K562 (cell line): ENCODE measurements at regions of chr6 and their contacts with region 1.

Region 1: DNA sequence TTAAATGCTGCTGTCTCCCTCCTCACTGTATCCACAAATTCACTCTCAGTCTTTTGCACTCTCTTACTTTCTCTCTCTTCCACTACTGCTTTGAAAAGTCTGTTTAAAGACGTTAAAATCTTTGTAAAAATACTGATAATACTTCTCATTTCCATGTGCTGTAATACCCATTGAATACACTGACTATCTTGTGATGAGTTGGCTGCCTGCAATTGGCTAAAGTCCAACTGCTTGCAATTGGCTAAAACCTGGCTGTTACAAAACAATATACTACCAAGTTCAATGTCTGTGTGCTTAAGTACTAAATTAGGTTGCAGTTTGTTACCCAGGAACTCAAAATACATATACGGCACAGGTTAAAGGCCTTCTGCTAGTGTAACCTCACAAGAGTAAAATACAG is 264.8 kb downstream of the THBS2 start:
- DNase-seq: no peak
- ATAC-seq: no peak
- H3K4me3 ChIP-seq: no peak overlapping the region
- H3K27ac ChIP-seq: no peak overlapping the region
- H3K4me1 ChIP-seq: no peaks in the 10 kb centered on the region
- H3K27me3 ChIP-seq: no peaks in the 10 kb centered on the region
- CTCF ChIP-seq: no peak
- EP300 ChIP-seq: no peak
- POLR2A ChIP-seq: no peak
- RAD21 ChIP-seq: no peak

Region 2: GRCh38 chr6:168884646-168885086 is 104.1 kb before region 1 on chr6:
- CTCF ChIA-PET with region 1: no interaction called
- POLR2A ChIA-PET with region 1: no interaction called
- in situ Hi-C with region 1: no loop called
- intact Hi-C with region 1: no loop called
- DNase-seq: peak; percentile 70 to 89 (median 88)
- ATAC-seq: peak; percentile 99
- H3K4me3 ChIP-seq: no peak overlapping the region
- H3K27ac ChIP-seq: no peak overlapping the region
- H3K4me1 ChIP-seq: peaks cover 0 to 4% of the 10 kb centered on the region in 2 experiments; a peak in 1 of 5 replicates
- H3K27me3 ChIP-seq: peaks cover 40 to 78% of the 10 kb centered on the region in 2 experiments
- CTCF ChIP-seq: peak; percentile 88 to 94 (median 89)
- EP300 ChIP-seq: no peak
- POLR2A ChIP-seq: no peak
- RAD21 ChIP-seq: peak; percentile 75 to 92

Region 3: DNA sequence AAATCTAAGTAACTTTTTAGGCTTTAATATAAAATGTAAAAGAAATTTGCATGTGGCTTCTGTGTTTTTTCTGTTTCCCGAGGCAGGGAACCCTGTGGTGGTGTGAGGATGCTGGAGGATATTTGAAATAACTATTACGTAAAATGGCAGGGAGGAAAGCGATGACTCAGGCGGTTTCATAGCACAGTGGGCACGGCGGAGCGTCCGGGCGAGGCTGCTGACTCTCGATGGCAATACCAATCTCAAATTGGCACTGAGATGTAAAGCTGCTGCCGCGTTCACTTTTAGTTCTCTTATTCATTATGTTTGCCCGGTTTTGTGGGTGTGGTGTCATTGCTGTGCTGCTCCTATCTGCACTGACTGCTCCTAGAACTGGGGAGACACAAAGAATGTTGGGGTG is 10.6 kb after region 1 on chr6:
- CTCF ChIA-PET with region 1: no interaction called
- POLR2A ChIA-PET with region 1: no interaction called
- in situ Hi-C with region 1: no loop called
- intact Hi-C with region 1: no loop called
- DNase-seq: no peak
- ATAC-seq: no peak
- H3K4me3 ChIP-seq: no peak overlapping the region
- H3K27ac ChIP-seq: no peak overlapping the region
- H3K4me1 ChIP-seq: no peaks in the 10 kb centered on the region
- H3K27me3 ChIP-seq: peaks cover 16 to 41% of the 10 kb centered on the region in 2 experiments
- CTCF ChIP-seq: no peak
- EP300 ChIP-seq: no peak
- POLR2A ChIP-seq: no peak
- RAD21 ChIP-seq: no peak

Region 4: DNA sequence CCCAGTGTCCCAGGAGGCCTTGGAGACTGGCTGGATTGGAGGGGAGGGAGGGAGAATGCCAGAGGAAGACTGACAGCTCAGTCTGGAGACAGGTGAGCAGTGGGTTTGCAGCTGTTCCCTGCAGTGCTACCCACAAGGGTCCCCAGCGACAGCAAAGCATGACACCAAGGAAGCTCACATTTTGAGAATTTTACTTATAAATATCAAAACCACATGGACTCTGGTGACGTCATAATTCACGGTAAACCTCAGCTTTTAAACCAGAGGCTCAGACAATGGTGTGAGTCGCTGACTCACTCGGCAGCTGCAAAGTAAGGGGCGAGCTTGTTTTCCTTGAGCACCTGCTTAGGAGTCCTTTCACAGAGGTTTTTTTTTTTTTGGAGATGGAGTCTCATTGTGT is 199.7 kb after region 1 on chr6:
- CTCF ChIA-PET with region 1: no interaction called
- POLR2A ChIA-PET with region 1: no interaction called
- in situ Hi-C with region 1: no loop called
- intact Hi-C with region 1: no loop called
- DNase-seq: no peak
- ATAC-seq: no peak
- H3K4me3 ChIP-seq: no peak overlapping the region
- H3K27ac ChIP-seq: no peak overlapping the region
- H3K4me1 ChIP-seq: no peaks in the 10 kb centered on the region
- H3K27me3 ChIP-seq: peaks cover 34 to 67% of the 10 kb centered on the region in 2 experiments
- CTCF ChIP-seq: no peak
- EP300 ChIP-seq: no peak
- POLR2A ChIP-seq: no peak
- RAD21 ChIP-seq: no peak

Region 5: DNA sequence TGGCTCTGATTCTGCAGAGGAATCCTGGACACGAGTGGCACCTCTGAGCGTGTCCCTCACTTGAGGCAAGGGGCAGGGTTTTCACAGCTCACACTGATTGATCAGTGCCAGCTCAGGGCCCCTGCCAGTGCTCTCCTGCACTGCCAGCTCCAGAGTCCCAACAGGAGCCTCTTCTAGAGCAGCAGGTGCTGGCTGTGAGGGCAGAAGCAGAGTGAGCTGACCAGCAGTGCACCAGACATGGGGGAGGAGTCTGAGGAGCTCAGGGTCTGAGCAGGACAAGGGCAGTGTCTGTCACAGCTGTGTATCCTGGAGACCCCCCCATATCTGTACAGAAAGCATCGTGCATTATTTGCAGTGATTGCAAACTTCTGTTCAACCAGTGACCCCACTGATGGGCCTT is 296.4 kb after region 1 on chr6:
- CTCF ChIA-PET with region 1: no interaction called
- POLR2A ChIA-PET with region 1: no interaction called
- in situ Hi-C with region 1: no loop called
- intact Hi-C with region 1: no loop called
- DNase-seq: no peak
- ATAC-seq: no peak
- H3K4me3 ChIP-seq: no peak overlapping the region
- H3K27ac ChIP-seq: no peak overlapping the region
- H3K4me1 ChIP-seq: no peaks in the 10 kb centered on the region
- H3K27me3 ChIP-seq: peaks cover 5 to 43% of the 10 kb centered on the region in 2 experiments; a peak in 3 of 5 replicates
- CTCF ChIP-seq: no peak
- EP300 ChIP-seq: no peak
- POLR2A ChIP-seq: no peak
- RAD21 ChIP-seq: no peak

Region 6: GRCh38 chr6:169503422-169504152 is 514.8 kb after region 1 on chr6:
- CTCF ChIA-PET with region 1: no interaction called
- POLR2A ChIA-PET with region 1: no interaction called
- in situ Hi-C with region 1: loop called (anchors 10 kb)
- intact Hi-C with region 1: no loop called
- DNase-seq: no peak
- ATAC-seq: no peak
- H3K4me3 ChIP-seq: no peak overlapping the region
- H3K27ac ChIP-seq: no peak overlapping the region
- H3K4me1 ChIP-seq: peaks cover 0 to 5% of the 10 kb centered on the region in 2 experiments; a peak in 1 of 5 replicates
- H3K27me3 ChIP-seq: peaks cover 24 to 38% of the 10 kb centered on the region in 2 experiments; a peak in 4 of 5 replicates
- CTCF ChIP-seq: no peak
- EP300 ChIP-seq: no peak
- POLR2A ChIP-seq: no peak
- RAD21 ChIP-seq: no peak